ENCODE measurements at regions of chr21 and their contacts with region 1.

Region 1: DNA sequence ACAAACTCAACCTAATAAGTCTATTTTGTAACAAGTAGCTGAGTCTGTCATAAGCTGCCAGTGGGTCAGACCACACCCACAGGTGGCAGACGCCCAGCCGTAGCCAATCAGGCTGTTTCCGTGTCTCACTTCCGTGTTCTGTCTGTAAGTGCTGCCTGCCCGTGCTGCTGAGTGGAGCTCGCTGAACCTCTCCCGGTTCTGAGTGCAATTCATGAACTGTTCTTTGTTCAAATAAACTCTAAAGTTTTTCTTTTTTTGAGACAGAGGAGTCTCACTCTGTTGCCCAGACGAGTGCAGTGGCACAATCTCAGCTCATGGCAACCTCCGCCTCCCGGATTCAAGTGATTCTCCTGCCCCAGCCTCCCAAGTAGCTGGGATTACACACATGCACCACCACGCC is 25.1 kb downstream of the POFUT2 start:
- DNase-seq: no peak
- ATAC-seq: no peak
- H3K4me3 ChIP-seq: no peak overlapping the region
- H3K27ac ChIP-seq: no peak overlapping the region
- H3K4me1 ChIP-seq: no peaks in the 10 kb centered on the region
- H3K27me3 ChIP-seq: peaks cover 0 to 3% (median 0%) of the 10 kb centered on the region in 3 donors
- CTCF ChIP-seq: no peak
- POLR2A ChIP-seq: no peak

Region 2: GRCh38 chr21:44657635-44658540 is 604.7 kb before region 1 on chr21 and contains the start of gene KRTAP12-3:
- in situ Hi-C with region 1: no loop called
- intact Hi-C with region 1: no loop called
- DNase-seq: no peak
- ATAC-seq: no peak
- H3K4me3 ChIP-seq: no peak within 1 kb of the TSS
- H3K27ac ChIP-seq: no peak within 1 kb of the TSS
- H3K4me1 ChIP-seq: no peaks in the 10 kb centered on the region
- H3K27me3 ChIP-seq: peaks cover 0 to 8% (median 4%) of the 10 kb centered on the region in 3 donors
- CTCF ChIP-seq: no peak
- POLR2A ChIP-seq: no peak
- total RNA-seq, gene KRTAP12-3: not detected

Region 3: DNA sequence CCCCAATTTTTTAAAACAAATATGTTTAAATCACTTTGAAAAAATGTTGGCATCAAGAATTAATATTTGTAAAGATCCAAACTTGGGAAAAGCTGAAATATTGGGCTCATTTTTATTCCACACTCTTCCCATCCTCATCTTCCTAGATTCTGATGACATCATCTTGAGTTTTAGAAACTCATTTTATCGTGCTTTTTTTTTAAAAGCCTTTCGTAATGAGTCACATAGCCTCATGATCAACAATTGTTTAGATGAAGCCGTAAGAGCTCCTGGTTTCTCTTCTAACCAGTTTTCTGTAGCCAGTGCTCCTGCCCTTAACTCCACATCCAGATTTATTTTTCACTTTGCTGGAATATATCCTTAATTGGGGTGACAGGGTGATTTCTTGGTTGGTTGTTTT is 53.6 kb before region 1 on chr21:
- in situ Hi-C with region 1: no loop called
- intact Hi-C with region 1: no loop called
- DNase-seq: no peak
- ATAC-seq: no peak
- H3K4me3 ChIP-seq: no peak overlapping the region
- H3K27ac ChIP-seq: no peak overlapping the region
- H3K4me1 ChIP-seq: no peaks in the 10 kb centered on the region
- H3K27me3 ChIP-seq: no peaks in the 10 kb centered on the region
- CTCF ChIP-seq: no peak
- POLR2A ChIP-seq: no peak

Region 4: GRCh38 chr21:45248893-45249381 is 13.7 kb before region 1 on chr21:
- in situ Hi-C with region 1: no loop called
- intact Hi-C with region 1: no loop called
- DNase-seq: no peak
- ATAC-seq: peak in 1 of 2 donors; percentile 50
- H3K4me3 ChIP-seq: peak overlapping the region in 2 of 4 donors; percentile 20 to 46
- H3K27ac ChIP-seq: no peak overlapping the region
- H3K4me1 ChIP-seq: peaks cover 3 to 8% of the 10 kb centered on the region in 2 donors
- H3K27me3 ChIP-seq: peaks cover 8 to 30% (median 13%) of the 10 kb centered on the region in 3 donors
- CTCF ChIP-seq: no peak
- POLR2A ChIP-seq: no peak

Region 5: GRCh38 chr21:45366931-45367401 is 104.3 kb after region 1 on chr21:
- in situ Hi-C with region 1: no loop called
- intact Hi-C with region 1: no loop called
- DNase-seq: peak; percentile 32 to 36
- ATAC-seq: peak in 1 of 2 donors; percentile 15
- H3K4me3 ChIP-seq: no peak overlapping the region
- H3K27ac ChIP-seq: peak overlapping the region; percentile 50 to 86 (median 71)
- H3K4me1 ChIP-seq: peaks cover 8 to 18% of the 10 kb centered on the region in 2 donors
- H3K27me3 ChIP-seq: peaks cover 0 to 11% (median 5%) of the 10 kb centered on the region in 3 donors
- CTCF ChIP-seq: no peak
- POLR2A ChIP-seq: no peak

Region 6: DNA sequence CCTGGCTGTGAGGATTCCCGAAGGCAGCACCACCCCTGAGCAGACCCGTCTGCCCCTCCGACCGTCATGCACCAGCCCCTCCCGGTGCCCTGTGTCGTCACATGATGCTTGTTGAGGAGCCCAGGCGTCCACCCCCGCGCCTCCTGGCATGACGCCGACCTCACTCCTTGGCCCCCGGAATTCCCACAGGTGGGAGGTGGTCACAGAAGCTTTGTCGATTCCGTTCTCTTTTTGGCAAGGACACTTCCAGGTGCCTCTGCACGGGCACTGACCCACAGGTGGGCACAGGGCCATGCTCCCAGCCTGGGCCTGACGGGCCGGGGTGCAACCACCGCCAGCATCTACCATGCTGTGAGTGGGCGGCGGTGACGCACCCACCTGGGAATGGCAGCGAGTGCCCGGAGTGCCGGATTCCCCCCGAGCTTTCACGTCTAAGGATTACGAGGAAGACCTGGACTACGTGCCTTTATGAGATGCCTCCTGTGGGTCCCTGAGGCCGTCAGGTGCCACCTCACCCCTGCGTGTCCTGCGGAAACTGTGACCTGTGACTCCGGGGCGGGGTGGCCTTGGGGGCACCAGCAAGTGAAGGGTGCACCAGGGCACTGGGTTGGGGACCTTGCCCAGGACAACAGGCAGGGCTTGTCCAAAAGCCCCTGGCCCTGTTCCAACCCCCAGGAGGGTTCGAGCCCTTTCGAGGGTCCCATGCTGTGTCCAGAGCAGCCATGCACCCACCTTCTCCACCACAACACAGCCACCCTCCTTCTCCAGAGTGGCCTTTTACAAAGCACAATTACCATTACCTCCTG is 687.5 kb after region 1 on chr21:
- in situ Hi-C with region 1: no loop called
- intact Hi-C with region 1: loop called (anchors 5 kb)
- DNase-seq: peak in 1 of 2 donors; percentile 25
- ATAC-seq: peak; percentile 6 to 9
- H3K4me3 ChIP-seq: no peak overlapping the region
- H3K27ac ChIP-seq: peak overlapping the region in 1 of 4 donors; percentile 41
- H3K4me1 ChIP-seq: peaks cover 0 to 7% of the 10 kb centered on the region in 2 donors
- H3K27me3 ChIP-seq: peaks cover 25 to 36% (median 28%) of the 10 kb centered on the region in 3 donors
- CTCF ChIP-seq: no peak
- POLR2A ChIP-seq: no peak

Measured in gastrocnemius medialis (tissue), 4 donors.